ENCODE measurements at regions of chr7 and their contacts with region 1.

Region 1: DNA sequence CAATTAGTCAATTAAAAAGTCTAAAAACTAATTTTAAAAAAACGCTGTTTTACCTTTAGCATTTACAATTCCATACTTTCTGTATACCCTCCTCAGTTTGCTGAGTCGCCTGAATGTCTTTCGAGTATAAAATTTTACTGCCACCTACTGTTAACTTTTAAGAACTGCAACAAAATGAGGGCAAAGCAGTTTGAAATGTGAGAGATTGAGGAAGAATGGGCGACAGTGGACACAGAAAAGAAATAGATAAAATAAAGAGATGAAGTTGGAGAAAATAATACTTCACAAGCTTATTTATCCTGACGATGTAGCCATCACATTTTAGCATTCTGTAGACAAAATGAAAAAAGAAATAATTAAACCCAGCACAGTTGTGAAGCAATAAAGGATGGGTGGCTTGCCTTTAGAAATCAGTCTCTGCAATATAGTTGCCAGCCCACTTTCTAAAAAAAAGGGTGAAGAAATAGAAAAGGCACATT is 110.8 kb upstream of the PTN start:
- DNase-seq: no peak
- ATAC-seq: peak in 1 of 4 donors; percentile 54
- H3K4me3 ChIP-seq: no peak overlapping the region
- H3K27ac ChIP-seq: no peak overlapping the region
- H3K4me1 ChIP-seq: no peaks in the 10 kb centered on the region
- H3K27me3 ChIP-seq: no peaks in the 10 kb centered on the region
- CTCF ChIP-seq: peak; percentile 44

Region 2: GRCh38 chr7:137172105-137172590 is 282.1 kb before region 1 on chr7:
- intact Hi-C with region 1: loop called in 1 of 2 experiments (anchors 10 kb)
- DNase-seq: no peak
- ATAC-seq: no peak
- H3K4me3 ChIP-seq: no peak overlapping the region
- H3K27ac ChIP-seq: no peak overlapping the region
- H3K4me1 ChIP-seq: no peaks in the 10 kb centered on the region
- H3K27me3 ChIP-seq: no peaks in the 10 kb centered on the region
- CTCF ChIP-seq: no peak